ENCODE measurements at regions of chr13 and their contacts with region 1.

Region 1: DNA sequence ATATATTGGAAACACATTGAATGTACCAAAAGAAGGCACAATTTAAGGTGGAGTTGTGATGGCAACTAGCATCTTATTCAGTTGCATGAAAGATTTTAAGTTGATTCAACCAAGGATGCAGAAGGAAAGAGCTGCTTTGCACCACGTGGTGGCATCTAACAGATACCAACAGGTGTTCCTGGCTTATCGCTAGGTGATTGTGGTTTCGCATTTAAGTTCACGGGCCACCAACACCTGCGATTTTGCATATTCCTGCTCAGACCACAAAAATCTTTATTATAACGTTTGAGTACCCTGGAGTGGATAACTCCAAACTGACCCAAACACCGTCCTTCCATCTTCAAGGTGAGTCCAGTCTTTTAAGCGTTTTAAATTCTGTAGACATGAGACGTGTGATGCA is 45.3 kb downstream of the RGCC start:
- DNase-seq: peak in 7 of 9 donors; percentile 34 to 63 (median 56)
- ATAC-seq: peak; percentile 72
- H3K4me3 ChIP-seq: no peak overlapping the region
- H3K4me3 Mint-ChIP-seq: peak overlapping the region in 8 of 10 donors; percentile 35 to 68 (median 51)
- H3K27ac ChIP-seq: peak overlapping the region; percentile 22
- H3K27ac Mint-ChIP-seq: peak overlapping the region; percentile 34 to 96 (median 91)
- H3K4me1 ChIP-seq: peaks cover 32 to 43% of the 10 kb centered on the region in 2 donors
- H3K4me1 Mint-ChIP-seq: peaks cover 41 to 63% (median 55%) of the 10 kb centered on the region in 7 donors
- H3K27me3 ChIP-seq: no peaks in the 10 kb centered on the region
- H3K27me3 Mint-ChIP-seq: no peaks in the 10 kb centered on the region

Region 2: GRCh38 chr13:41492404-41493260 is 10.0 kb before region 1 on chr13:
- CTCF ChIA-PET with region 1: interaction called, 8 read pairs
- POLR2A ChIA-PET with region 1: interaction called, 22 read pairs
- intact Hi-C with region 1: loop called in 1 of 2 experiments (anchors 1 kb)
- DNase-seq: peak in 7 of 9 donors; percentile 59 to 76 (median 71)
- ATAC-seq: peak; percentile 84
- H3K4me3 ChIP-seq: peak overlapping the region; percentile 19
- H3K4me3 Mint-ChIP-seq: peak overlapping the region; percentile 66 to 91 (median 80)
- H3K27ac ChIP-seq: peak overlapping the region; percentile 76
- H3K27ac Mint-ChIP-seq: peak overlapping the region; percentile 96 to 100 (median 99)
- H3K4me1 ChIP-seq: peaks cover 24 to 78% of the 10 kb centered on the region in 2 donors
- H3K4me1 Mint-ChIP-seq: peaks cover 56 to 97% (median 90%) of the 10 kb centered on the region in 7 donors
- H3K27me3 ChIP-seq: no peaks in the 10 kb centered on the region
- H3K27me3 Mint-ChIP-seq: no peaks in the 10 kb centered on the region

Region 3: DNA sequence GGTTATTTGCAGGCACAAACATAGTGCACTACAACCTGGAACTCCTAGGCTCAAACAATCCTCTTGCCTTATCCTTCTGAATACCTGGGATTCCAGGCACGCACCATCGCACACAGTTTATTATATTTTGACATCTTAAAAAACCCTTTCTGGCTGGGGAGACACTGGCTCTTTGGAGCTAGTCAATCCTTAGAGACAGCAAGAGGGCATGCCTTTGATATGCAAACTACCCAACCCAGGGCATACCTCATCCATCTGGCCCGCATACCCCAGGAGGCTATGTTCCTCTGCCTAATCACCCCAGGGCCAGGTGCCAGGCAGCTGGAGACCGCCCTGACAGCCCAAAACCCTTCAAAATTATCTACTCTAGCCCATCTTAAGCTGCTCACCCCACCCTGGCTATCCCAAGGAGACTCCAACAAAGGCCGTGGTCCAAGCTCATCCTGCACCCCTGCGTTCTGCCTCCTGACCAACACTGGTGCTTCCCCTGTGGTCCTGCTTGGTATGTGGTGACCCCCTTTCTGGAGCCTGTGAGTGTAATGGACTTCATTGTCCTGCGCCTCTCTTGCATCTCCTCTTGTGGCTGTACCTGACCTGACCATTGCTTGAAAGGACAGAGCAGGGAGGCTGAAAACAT is 41.1 kb after region 1 on chr13:
- CTCF ChIA-PET with region 1: interaction called, 3 read pairs
- POLR2A ChIA-PET with region 1: interaction called, 3 read pairs
- intact Hi-C with region 1: loop called in 1 of 2 experiments (anchors 5 kb)
- DNase-seq: no peak
- ATAC-seq: no peak
- H3K4me3 ChIP-seq: no peak overlapping the region
- H3K4me3 Mint-ChIP-seq: no peak overlapping the region
- H3K27ac ChIP-seq: no peak overlapping the region
- H3K27ac Mint-ChIP-seq: peak overlapping the region in 4 of 9 donors; percentile 8 to 83 (median 34)
- H3K4me1 ChIP-seq: peaks cover 0 to 9% of the 10 kb centered on the region in 2 donors
- H3K4me1 Mint-ChIP-seq: peaks cover 9 to 33% (median 22%) of the 10 kb centered on the region in 7 donors
- H3K27me3 ChIP-seq: no peaks in the 10 kb centered on the region
- H3K27me3 Mint-ChIP-seq: no peaks in the 10 kb centered on the region

Measured in naive thymus-derived CD4-positive, alpha-beta T cell (primary cell).